OCI-LY7 (cell line): ENCODE measurements at regions of chr1 and their contacts with region 1.

Region 1: GRCh38 chr1:165645654-165646366 is 14.8 kb downstream of the MGST3 start:
- DNase-seq: no peak
- H3K4me3 ChIP-seq: no peak overlapping the region
- H3K27ac ChIP-seq: no peak overlapping the region
- H3K4me1 ChIP-seq: peaks cover 19% of the 10 kb centered on the region
- CTCF ChIP-seq: no peak

Region 2: GRCh38 chr1:165056914-165057313 is 588.9 kb before region 1 on chr1:
- CTCF ChIA-PET with region 1: no interaction called
- POLR2A ChIA-PET with region 1: no interaction called
- intact Hi-C with region 1: no loop called
- DNase-seq: no peak
- H3K4me3 ChIP-seq: no peak overlapping the region
- H3K27ac ChIP-seq: no peak overlapping the region
- H3K4me1 ChIP-seq: no peaks in the 10 kb centered on the region
- CTCF ChIP-seq: no peak

Region 3: DNA sequence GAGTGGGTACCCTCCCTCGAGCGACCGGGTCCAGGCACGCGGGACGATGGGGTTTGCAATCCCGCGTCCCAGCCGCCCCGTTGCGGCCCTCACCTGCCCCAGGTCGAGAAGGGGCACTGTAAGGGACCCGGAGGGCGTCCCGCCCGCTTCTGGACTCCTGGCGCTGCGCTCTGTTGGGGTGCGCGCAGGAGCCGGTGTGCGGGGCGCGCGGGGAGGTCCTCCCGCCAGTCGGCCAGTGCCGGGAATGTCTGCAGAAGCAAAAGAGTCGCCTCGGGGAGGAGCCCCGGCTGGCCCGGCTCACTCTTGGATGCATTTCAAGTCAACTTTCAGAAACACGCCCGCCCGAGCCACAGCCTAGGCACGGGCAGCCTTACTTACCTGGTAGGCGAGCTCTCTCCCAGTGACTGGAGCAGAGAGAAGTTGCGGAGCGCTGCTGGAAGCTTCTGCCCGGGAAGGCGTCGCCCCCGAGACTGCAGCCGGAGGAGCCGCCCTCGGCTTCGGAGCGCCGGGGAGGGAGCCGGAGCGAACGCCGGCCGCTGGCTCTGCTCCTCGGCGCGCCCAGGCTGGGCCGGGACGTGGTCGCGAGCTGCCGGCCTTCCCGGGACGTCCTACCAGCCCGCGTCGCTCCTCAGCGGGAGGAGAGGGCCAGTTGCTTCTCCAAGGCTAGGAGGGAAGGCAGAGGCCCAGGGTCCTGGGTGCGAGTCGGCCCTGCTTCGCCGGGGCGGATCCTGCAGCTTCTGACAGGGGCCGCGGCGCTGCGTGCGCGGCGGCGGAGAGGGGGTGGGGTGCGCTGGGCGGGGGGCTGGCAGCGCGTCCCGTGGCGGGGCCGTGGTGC is 289.6 kb before region 1 on chr1 and contains the start of gene LMX1A:
- CTCF ChIA-PET with region 1: no interaction called
- POLR2A ChIA-PET with region 1: no interaction called
- intact Hi-C with region 1: no loop called
- DNase-seq: no peak
- H3K4me3 ChIP-seq: no peak within 1 kb of the TSS
- H3K27ac ChIP-seq: no peak within 1 kb of the TSS
- H3K4me1 ChIP-seq: no peaks in the 10 kb centered on the region
- CTCF ChIP-seq: no peak
- total RNA-seq, gene LMX1A: not detected in 2 replicates

Region 4: GRCh38 chr1:165408518-165408917 is 237.3 kb before region 1 on chr1:
- CTCF ChIA-PET with region 1: no interaction called
- POLR2A ChIA-PET with region 1: no interaction called
- intact Hi-C with region 1: no loop called
- DNase-seq: no peak
- H3K4me3 ChIP-seq: no peak overlapping the region
- H3K27ac ChIP-seq: no peak overlapping the region
- H3K4me1 ChIP-seq: no peaks in the 10 kb centered on the region
- CTCF ChIP-seq: peak; percentile 62

Region 5: DNA sequence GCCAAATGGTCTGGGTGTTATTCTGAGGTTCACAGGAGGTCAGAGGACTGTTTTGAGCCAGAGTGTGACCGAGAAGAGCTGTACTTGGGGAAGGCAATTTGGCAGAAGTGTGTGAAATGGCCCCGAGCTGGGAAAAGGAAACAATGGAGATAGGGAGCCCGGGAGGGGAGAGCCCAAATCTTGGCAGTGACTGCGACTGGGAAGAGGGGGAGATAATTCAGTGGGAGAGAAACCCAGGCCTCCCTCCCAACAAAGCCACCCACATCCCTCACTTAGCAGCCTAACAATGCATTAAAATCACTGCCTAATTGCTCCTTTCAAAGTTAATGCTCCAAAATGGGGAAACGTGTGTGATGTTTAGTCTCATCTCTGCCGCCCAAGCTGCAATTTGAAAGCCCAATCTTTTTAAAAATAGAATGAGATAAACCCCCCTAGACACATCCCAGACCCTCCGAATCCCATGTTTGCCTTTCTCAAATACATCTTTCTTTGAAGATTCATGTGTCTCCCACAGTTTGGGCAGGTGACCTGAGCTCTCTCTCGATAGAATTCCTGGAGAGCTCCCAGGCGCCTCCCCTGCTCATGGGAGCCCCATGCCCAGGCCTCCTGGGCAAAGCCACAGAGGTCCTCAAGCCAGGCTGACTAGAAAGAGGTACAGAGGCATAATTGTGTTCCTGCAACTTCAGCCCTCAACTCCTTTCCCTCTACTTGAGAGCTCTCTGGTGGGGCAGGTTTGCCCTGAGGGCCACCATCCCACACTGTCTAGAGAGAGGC is 84.7 kb before region 1 on chr1:
- CTCF ChIA-PET with region 1: no interaction called
- POLR2A ChIA-PET with region 1: no interaction called
- intact Hi-C with region 1: no loop called
- DNase-seq: no peak
- H3K4me3 ChIP-seq: no peak overlapping the region
- H3K27ac ChIP-seq: no peak overlapping the region
- H3K4me1 ChIP-seq: no peaks in the 10 kb centered on the region
- CTCF ChIP-seq: no peak

Region 6: GRCh38 chr1:165659581-165659895 is 13.7 kb after region 1 on chr1:
- CTCF ChIA-PET with region 1: no interaction called
- POLR2A ChIA-PET with region 1: interaction called, 13 read pairs
- intact Hi-C with region 1: no loop called
- DNase-seq: no peak
- H3K4me3 ChIP-seq: no peak overlapping the region
- H3K27ac ChIP-seq: no peak overlapping the region
- H3K4me1 ChIP-seq: no peaks in the 10 kb centered on the region
- CTCF ChIP-seq: no peak